ENCODE measurements at regions of chr12 and their contacts with region 1.

Region 1: DNA sequence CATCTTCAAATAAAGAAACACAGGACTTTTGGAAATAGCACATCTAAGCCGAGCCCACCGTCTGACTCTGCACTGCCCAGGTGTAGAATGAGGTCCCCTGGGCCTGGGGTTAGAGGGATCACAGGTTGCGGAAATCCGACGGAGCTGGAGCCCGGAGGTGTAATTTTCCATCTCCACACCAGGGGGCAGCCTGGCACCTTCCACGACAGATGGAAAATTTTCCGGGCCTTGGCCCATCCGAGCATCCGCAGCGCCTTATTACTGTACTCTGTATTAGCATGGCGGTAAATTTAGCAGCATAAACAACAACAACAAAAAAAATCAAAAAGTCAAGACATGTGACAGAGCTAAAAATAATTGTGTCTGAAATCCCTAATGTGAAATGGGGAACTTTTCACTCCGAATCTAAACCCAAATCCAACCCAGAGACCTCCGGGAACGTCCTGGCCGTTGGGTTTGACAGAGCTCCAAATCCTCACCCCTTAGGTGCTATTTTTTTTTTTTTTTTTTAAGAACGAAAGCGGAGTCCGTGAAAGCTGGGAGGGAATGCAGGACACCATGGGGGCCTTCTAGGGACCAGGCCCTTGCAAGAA is 93.9 kb downstream of the KSR2 start:
- H3K4me3 ChIP-seq: no peak overlapping the region
- H3K27ac ChIP-seq: no peak overlapping the region
- H3K4me1 ChIP-seq: no peaks in the 10 kb centered on the region; the same call in 1 of the 2 replicates
- CTCF ChIP-seq: peak; percentile 73

Region 2: DNA sequence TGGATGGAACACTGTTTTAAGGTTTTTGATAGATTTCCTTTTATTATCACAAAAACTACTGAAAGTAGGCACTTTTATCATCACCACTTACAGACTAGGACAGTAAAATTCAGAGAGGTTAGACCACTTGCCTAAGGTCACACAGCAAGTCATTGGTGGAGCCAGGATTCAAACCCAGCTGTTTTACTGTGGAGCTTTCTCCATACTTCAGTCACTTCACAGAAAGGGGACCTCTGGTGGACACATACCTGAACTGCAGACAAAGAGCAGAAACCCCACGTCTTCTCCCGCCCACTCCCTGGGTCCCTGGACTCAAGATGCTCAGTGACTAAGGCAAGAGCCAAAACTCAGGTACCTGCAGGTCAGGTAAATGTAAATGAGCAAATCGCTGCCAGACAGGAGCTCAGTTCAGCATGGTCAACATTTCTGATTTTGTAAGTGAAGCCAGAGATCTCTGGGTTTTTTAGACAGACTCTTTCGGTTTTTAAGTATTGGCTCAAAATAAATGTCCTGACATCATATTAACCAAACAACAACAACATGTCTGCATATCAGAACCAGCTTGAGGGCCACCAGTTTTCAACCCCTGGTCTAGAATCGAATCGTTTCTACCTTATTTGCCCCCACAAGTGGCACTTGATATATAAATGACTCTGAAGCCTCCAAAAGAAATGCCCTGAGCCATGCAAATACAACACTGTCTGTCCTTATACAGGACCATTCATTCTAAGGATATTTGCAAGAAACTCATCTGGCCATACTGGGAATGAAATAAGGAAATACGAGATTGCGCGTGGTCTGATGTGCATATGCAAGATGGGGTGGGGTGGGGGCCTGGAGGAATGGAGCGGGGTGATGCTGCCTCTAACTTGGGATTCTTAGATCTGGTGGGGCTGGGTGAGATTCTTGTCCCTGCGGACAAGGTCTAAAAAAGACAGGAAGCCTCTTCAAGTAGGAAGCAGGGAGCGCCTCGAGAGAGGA is 17.0 kb before region 1 on chr12:
- CTCF ChIA-PET with region 1: interaction called, 10 read pairs
- POLR2A ChIA-PET with region 1: no interaction called
- H3K4me3 ChIP-seq: no peak overlapping the region
- H3K27ac ChIP-seq: no peak overlapping the region
- H3K4me1 ChIP-seq: no peaks in the 10 kb centered on the region
- CTCF ChIP-seq: 0 out of 2 replicates have a peak, but pooled peaks have one; percentile 27

Region 3: GRCh38 chr12:118035246-118036041 is 160.5 kb after region 1 on chr12:
- CTCF ChIA-PET with region 1: interaction called, 55 read pairs
- POLR2A ChIA-PET with region 1: no interaction called
- H3K4me3 ChIP-seq: no peak overlapping the region
- H3K27ac ChIP-seq: no peak overlapping the region
- H3K4me1 ChIP-seq: no peaks in the 10 kb centered on the region
- CTCF ChIP-seq: no peak

Region 4: DNA sequence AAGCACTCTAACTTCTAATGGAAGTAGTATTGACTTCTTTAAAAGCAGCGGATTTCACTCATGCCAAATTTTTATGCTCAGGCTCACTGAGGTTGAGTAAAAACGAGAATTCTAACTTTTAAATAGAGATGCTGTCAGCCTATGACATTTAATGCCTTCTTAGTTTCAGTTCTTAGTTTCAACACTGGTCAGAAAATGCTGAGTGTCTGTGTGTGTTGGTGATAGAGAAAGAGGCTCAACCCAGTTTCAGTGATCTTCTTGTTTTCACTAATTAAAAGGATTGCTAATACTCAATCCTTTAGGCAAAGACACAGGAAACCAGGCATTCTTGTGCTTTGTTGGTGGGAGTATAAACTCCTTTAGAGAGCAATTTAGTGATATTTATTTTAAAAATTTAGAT is 292.0 kb after region 1 on chr12:
- CTCF ChIA-PET with region 1: no interaction called
- POLR2A ChIA-PET with region 1: no interaction called
- H3K4me3 ChIP-seq: no peak overlapping the region
- H3K27ac ChIP-seq: no peak overlapping the region
- H3K4me1 ChIP-seq: no peaks in the 10 kb centered on the region
- CTCF ChIP-seq: no peak

Measured in HEK293 (cell line).